Activated naive CD4-positive, alpha-beta T cell treated with anti-CD3 and anti-CD28 coated beads, Interleukin-2, amount 10 ng/mL, durations not matched to agents 7 days and 5 days (primary cell): ENCODE measurements at regions of chr11 and their contacts with region 1.

Region 1: DNA sequence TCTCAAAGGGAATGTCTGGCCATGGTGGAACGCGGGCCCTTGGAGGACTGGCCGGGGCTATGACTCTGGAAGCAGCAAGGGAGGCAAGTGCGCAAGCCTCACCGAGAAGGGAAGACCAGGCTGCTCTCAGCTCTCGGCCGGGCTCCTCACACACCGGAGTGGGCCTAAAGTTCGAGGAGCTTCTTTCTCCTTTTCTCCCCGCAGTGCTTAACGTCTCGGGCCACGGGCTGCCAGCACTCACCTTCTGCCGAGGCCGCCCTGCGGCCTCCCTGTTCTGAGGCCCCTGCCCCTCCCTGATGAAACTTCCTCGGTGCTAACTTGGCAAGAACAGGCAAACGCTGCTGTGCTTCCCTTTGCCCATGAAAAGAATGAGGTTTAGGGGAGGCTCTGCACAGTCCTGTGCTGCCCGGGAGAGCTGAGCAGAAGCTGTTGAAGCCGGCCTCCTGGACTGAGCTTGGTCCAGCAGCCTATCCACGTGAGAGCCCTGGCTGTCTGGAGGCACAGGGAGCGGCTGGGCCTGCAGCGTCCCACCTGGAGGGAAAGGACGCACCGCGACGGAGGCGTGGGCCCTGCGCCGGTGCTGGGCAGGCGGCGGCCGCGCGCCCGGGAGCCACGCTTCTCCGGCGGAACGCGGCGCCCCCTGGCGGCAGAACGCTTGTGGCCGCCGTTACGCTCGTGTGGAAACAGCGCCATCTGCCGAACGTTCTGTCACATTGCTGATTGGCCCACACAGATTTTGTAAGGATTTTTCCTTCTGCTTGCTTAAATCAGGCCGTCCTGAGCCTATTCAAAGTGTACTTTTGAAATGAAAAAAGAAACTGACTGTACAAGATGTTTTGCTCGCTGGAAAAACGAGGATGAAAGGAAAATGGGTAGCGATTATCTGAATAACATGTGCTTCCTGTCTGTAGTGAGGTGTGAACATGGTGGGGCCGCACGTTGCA is 65.0 kb upstream of the TMEM45B start:
- DNase-seq: peak; percentile 81
- H3K4me3 Mint-ChIP-seq: no peak overlapping the region
- H3K27ac Mint-ChIP-seq: no peak overlapping the region
- H3K4me1 Mint-ChIP-seq: peaks cover 2% of the 10 kb centered on the region
- H3K27me3 Mint-ChIP-seq: peaks cover 29% of the 10 kb centered on the region

Region 2: GRCh38 chr11:129364143-129364654 is 386.4 kb before region 1 on chr11:
- CTCF ChIA-PET with region 1: interaction called, 12 read pairs
- DNase-seq: peak; percentile 88
- H3K4me3 Mint-ChIP-seq: no peak overlapping the region
- H3K27ac Mint-ChIP-seq: no peak overlapping the region
- H3K4me1 Mint-ChIP-seq: no peaks in the 10 kb centered on the region
- H3K27me3 Mint-ChIP-seq: peaks cover 28% of the 10 kb centered on the region

Region 3: GRCh38 chr11:129375751-129376657 is 374.6 kb before region 1 on chr11 and contains the start of gene BARX2:
- CTCF ChIA-PET with region 1: interaction called, 16 read pairs
- DNase-seq: peak; percentile 48
- H3K4me3 Mint-ChIP-seq: peak within 1 kb of the TSS; percentile 59
- H3K27ac Mint-ChIP-seq: no peak within 1 kb of the TSS
- H3K4me1 Mint-ChIP-seq: peaks cover 29% of the 10 kb centered on the region
- H3K27me3 Mint-ChIP-seq: peaks cover 75% of the 10 kb centered on the region